Tibial artery (tissue), 4 donors: ENCODE measurements at regions of chr19 and their contacts with region 1.

Region 1: DNA sequence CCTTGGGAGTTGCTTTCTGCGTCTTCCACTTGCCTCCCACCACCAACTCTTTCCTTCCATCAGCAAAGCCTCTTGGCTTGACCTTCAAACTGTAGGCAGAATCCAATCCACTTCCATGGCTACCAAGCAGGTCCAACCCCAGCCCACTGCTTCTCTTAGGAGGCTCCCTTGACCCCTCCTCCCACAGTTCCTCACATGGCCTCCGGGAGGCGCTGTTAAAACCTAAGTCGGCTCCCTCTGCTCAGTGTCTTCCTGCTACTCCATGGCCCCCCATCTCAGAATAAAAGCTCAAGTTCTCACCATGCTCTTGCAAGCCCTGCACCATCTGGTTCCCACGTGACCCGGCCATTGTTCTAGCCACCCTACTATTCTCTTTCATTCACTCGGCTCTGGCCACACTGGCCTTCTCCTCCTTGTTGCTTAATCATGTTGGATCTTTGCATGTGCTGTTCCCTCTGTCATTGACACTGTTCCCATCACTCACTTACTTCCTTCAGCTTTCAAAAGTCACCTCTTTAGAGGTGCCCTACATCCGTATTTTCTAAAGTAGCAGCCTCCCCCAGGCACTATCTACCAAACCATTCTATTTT is 7.5 kb downstream of the IZUMO2 start:
- DNase-seq: no peak
- H3K4me3 ChIP-seq: no peak overlapping the region
- H3K27ac ChIP-seq: no peak overlapping the region
- H3K4me1 ChIP-seq: no peaks in the 10 kb centered on the region
- H3K27me3 ChIP-seq: peaks cover 0 to 15% of the 10 kb centered on the region in 2 donors
- CTCF ChIP-seq: no peak

Region 2: DNA sequence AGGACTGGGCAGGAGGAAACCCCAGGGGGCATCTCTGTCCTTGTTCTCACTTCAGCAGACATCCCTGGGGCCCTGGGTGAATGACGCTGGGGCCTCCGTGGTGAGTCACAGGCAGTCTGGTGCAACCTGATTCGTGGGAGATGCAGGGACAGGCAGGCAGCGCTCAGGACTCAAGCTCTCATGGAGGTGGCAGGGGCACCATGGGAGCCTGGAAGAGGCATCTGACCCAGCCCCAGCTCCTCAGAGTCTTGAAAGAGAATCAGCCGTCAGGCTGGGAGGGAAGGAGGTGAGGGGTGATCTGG is 318.7 kb before region 1 on chr19:
- intact Hi-C with region 1: loop called (anchors 5 kb)
- DNase-seq: no peak
- H3K4me3 ChIP-seq: no peak overlapping the region
- H3K27ac ChIP-seq: no peak overlapping the region
- H3K4me1 ChIP-seq: no peaks in the 10 kb centered on the region
- H3K27me3 ChIP-seq: no peaks in the 10 kb centered on the region
- CTCF ChIP-seq: no peak